Right cardiac atrium (tissue), 5 donors: ENCODE measurements at regions of chr19 and their contacts with region 1.

Region 1: GRCh38 chr19:58154679-58155648 is 4.4 kb upstream of the ZNF329 start:
- DNase-seq: peak; percentile 98 to 99 (median 99)
- ATAC-seq: peak; percentile 98 to 99
- H3K4me3 ChIP-seq: peak overlapping the region; percentile 82
- H3K27ac ChIP-seq: peak overlapping the region; percentile 82
- H3K4me1 ChIP-seq: peaks cover 7% of the 10 kb centered on the region
- H3K27me3 ChIP-seq: no peaks in the 10 kb centered on the region

Region 2: DNA sequence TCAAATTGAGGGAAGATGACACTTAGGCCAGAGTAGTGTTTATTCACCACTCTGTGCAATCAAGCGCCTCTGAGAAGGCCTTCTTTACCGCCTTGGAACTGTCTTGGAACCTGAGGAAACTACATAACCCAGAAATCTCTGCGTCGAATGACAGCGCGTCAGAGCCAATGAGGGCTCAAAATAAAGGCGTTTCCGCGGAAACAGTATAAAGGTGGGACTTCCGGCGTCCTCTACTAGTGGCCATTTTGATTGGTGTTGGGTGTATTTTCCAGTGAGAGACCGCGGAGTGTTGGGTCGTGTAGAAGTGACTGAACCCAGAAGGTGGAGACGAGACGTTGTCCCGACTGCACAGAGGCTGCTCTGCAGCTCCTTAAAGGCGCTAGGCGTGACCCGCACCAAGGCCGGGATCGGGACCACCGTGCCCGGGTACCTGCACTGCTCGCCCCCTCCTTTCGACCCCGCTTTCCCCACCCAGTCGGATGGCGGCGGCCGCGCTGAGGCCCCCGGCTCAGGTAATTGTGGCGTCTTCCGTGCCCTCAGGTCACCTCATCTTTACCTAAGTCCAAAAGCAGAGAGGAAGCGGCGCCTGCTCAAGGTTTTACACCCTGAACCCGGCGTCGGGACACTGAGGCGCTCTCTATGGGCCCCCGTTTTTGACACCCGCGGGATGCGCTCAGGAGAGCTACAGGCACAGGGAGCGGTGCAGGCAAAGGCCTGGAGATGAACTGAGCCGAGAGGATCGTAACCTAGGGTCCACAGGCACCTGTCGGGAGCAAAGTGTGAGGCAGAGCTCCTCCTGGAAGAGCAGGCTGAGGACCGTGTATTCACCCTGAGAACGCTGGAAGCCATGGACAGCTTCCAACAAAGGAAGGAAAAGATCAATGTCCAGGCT is 408.1 kb before region 1 on chr19 and contains the start of gene ZNF776:
- intact Hi-C with region 1: loop called in 1 of 4 experiments (anchors 10 kb)
- DNase-seq: peak; percentile 78 to 90 (median 87)
- ATAC-seq: peak; percentile 97 to 98
- H3K4me3 ChIP-seq: peak within 1 kb of the TSS; percentile 93
- H3K27ac ChIP-seq: peak within 1 kb of the TSS; percentile 55
- H3K4me1 ChIP-seq: peaks cover 9% of the 10 kb centered on the region
- H3K27me3 ChIP-seq: no peaks in the 10 kb centered on the region
- total RNA-seq, gene ZNF776: 11.9 to 16.0 (median 13.7) TPM

Region 3: GRCh38 chr19:58021541-58022282 is 133.3 kb before region 1 on chr19:
- intact Hi-C with region 1: loop called (anchors 2 to 5 kb)
- DNase-seq: peak in 1 of 3 donors; percentile 49
- ATAC-seq: peak; percentile 94 to 96
- H3K4me3 ChIP-seq: no peak overlapping the region
- H3K27ac ChIP-seq: no peak overlapping the region
- H3K4me1 ChIP-seq: no peaks in the 10 kb centered on the region
- H3K27me3 ChIP-seq: no peaks in the 10 kb centered on the region

Region 4: DNA sequence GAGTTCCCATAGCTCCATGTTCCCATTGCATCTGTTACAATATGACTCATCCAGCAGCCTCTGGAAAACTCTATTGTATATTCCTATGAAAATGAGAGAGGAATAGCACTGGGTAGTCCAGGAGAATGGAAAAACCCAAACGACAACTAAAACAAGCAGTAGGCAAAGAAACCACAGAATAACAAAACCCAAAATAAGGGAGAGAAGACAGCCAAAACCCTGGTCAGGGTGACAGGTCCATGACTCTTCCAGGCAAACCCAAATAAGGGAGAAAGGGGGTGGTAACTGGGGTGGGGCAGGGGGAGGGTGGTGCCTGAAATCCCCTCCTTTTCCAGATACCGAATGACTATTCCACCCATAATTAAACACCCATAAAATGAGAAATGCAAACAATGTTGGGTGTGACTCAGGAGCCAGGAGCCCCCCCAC is 119.8 kb after region 1 on chr19:
- intact Hi-C with region 1: no loop called
- DNase-seq: no peak
- ATAC-seq: no peak
- H3K4me3 ChIP-seq: no peak overlapping the region
- H3K27ac ChIP-seq: no peak overlapping the region
- H3K4me1 ChIP-seq: no peaks in the 10 kb centered on the region
- H3K27me3 ChIP-seq: no peaks in the 10 kb centered on the region